A549 (cell line): ENCODE measurements at regions of chrX and their contacts with region 1.

Region 1: GRCh38 chrX:48737213-48737938 is 24.2 kb upstream of the GLOD5 start:
- DNase-seq: peak; percentile 87 to 99
- ATAC-seq: peak; percentile 100
- H3K4me3 ChIP-seq: peak overlapping the region; percentile 76
- H3K27ac ChIP-seq: peak overlapping the region; percentile 93 to 97
- H3K4me1 ChIP-seq: peaks cover 6% of the 10 kb centered on the region
- CTCF ChIP-seq: no peak
- EP300 ChIP-seq: no peak
- POLR2A ChIP-seq: peak; percentile 37; the same call in 1 of the 2 replicates
- RAD21 ChIP-seq: no peak

Region 2: DNA sequence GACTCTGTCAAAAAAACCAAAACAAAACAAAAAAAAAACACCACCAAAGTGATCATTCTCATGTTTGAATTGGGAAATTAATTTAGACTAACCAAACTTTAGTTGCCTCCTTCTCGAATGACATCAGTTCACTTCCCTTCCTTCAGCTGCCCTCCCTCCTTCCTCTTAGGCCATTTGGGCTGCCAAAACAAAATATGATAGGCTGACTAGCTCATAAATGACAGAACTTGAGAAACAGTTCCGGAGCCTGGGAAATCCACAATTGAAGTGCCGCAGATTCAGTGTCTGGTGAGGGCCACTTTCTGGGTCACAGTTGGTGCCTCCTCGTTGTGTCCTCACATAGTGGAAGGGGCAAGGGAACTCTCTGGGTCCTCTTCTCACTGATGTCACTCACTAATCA is 69.9 kb before region 1 on chrX:
- CTCF ChIA-PET with region 1: no interaction called
- POLR2A ChIA-PET with region 1: no interaction called
- DNase-seq: no peak
- ATAC-seq: no peak
- H3K4me3 ChIP-seq: no peak overlapping the region
- H3K27ac ChIP-seq: no peak overlapping the region
- H3K4me1 ChIP-seq: no peaks in the 10 kb centered on the region
- CTCF ChIP-seq: no peak
- EP300 ChIP-seq: no peak
- POLR2A ChIP-seq: no peak
- RAD21 ChIP-seq: no peak

Region 3: DNA sequence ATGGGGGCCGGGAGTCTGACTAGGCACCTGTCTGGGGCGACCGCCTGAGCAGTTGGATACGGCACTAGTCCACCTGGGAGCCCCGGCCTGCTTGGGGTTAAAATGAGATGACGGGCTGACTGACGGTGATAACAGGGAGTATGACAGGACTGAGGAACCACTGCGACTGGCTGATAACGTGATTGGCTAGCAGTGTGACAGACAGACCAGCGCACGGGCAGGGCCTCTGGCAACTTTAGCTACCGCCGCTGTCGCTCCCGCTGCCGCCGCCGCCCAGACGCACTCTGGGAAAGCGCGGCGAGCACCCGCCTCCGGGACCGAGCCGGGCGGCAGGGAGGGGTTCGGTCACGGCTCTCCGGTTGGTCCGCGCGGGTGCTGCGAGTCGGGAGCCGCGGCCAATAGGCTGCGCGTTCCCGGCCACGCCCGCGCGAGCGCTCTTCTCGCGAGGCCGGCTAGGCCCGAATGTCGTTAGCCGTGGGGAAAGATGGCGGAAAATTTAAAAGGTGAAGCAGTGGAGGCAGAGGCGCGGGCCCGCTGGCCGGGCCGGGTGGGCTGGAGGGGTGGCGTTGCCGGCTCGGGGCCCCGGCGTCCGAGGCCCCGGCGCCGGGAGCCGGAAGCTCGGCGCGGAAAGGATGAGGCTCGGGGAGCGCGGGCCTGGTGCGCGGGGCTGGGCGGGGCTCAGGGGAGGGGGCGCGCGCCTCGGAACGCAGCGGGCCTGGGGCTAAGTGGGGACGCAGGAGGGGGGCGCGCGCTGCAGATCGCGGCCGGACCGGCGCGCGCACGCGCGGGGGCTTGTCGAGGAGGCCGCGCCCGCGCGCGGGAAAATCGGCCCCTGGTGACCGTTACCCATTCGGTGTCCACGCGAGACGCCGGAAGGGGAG is 40.8 kb before region 1 on chrX and contains the start of gene SUV39H1:
- CTCF ChIA-PET with region 1: no interaction called
- POLR2A ChIA-PET with region 1: interaction called, 10 read pairs
- DNase-seq: peak; percentile 85 to 89
- ATAC-seq: peak; percentile 95 to 99
- H3K4me3 ChIP-seq: peak within 1 kb of the TSS; percentile 97
- H3K27ac ChIP-seq: peak within 1 kb of the TSS; percentile 95 to 99
- H3K4me1 ChIP-seq: peaks cover 7% of the 10 kb centered on the region; the same call in 2 of the 3 replicates
- CTCF ChIP-seq: no peak
- EP300 ChIP-seq: no peak
- POLR2A ChIP-seq: peak; percentile 64
- RAD21 ChIP-seq: no peak
- polyA plus RNA-seq, gene SUV39H1: 12.8 and 13.4 TPM in 2 replicates

Region 4: DNA sequence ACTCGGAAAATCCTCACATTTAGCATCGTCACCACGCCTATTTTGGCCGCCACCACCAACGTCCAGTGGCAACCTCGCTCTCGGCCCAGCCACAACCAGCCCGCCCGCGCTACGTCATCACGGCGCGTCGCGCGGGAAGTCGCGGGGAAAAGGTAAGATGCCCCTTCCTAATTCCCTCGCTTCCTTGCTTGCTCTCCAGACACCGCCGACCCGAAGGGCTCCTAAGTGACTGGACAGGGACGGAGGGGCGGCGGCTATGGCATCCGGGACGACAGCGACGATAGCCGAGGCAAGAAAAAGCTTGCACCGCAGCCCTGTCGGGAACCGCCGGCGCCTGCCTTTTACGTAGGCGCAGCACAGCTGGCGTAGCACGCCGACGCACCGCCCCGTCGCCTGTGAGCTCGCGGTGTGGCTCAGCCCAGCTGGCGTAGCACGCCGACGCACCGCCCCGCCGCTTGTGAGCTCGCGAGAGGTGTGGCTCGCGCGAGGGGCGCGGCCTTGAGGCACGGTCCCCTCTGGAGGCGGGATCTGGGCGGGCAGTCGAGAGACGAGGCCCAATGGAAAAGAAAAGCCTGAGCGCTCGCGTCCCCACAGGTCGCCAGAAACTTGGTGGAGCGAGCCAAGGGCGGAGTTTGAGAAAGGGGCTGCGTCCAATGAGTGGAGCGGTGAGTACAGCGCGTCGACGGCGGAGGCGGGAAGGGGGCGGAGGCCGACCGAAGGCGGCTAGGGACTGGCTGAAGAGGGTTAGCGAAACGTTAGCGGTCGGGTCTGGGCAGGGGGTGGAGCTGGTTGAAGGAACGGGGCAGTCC is 64.1 kb after region 1 on chrX and contains the start of gene HDAC6:
- CTCF ChIA-PET with region 1: no interaction called
- POLR2A ChIA-PET with region 1: interaction called, 23 read pairs
- DNase-seq: peak; percentile 92 to 99
- ATAC-seq: peak; percentile 88 to 93
- H3K4me3 ChIP-seq: peak within 1 kb of the TSS; percentile 64
- H3K27ac ChIP-seq: peak within 1 kb of the TSS; percentile 96 to 97
- H3K4me1 ChIP-seq: peaks cover 11% of the 10 kb centered on the region
- CTCF ChIP-seq: no peak
- EP300 ChIP-seq: no peak
- POLR2A ChIP-seq: peak; percentile 39
- RAD21 ChIP-seq: no peak
- polyA plus RNA-seq, gene HDAC6: 50.6 and 53.2 TPM in 2 replicates